ENCODE measurements at regions of chr1 and their contacts with region 1.

Region 1: DNA sequence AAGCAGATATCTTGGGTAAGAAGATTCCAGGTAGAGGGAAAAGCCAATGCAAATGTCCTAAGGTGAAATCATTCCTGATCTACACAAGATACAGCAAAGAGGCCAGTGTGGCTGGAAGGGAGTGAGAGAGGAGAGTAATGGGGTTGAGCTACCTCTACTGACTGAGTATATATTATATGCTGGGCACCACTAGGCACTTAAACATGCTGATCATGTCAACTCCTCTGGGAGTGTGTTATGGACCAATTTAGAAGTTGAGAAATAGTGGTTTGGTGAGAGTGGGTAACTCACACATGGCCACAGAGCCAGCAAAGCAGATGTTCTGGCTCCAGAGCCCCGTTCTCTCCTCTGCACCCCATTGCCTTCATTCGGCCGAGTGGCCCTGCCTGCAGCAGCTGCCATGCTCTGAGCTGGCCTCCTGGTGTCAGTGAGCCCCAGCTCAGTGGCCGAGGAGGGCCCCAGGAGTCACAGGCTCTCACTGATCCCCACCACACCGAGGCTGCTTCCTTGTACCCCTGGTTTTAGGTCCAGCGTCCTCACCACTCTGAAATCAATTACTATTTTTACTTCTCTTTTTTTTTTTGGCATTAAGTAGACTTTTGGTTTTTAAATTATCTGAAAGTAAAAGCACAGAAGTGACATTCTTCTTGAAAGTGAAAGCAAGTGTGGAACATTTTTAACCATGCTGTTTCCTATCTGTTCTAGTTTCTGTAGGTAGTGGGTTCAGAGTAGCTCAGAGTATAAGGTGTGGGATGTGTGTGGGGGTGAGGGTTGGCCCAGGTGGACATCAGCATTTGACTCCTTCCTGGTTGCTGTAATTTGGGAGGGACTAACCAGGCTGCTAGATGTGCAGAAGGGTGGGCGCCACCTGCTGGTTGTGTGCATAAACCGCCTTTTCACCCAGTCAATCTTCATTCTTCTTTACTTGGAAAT is 45.8 kb upstream of the CRNN start:
- DNase-seq: no peak
- H3K4me3 ChIP-seq: 0 out of 2 replicates have a peak overlapping the region, but pooled peaks have one; percentile 3
- CTCF ChIP-seq: peak; percentile 78

Region 2: GRCh38 chr1:152018537-152018936 is 441.3 kb before region 1 on chr1:
- CTCF ChIA-PET with region 1: no interaction called
- POLR2A ChIA-PET with region 1: no interaction called
- DNase-seq: no peak
- H3K4me3 ChIP-seq: no peak overlapping the region
- CTCF ChIP-seq: peak; percentile 22

Region 3: GRCh38 chr1:152141974-152142584 is 317.8 kb before region 1 on chr1:
- CTCF ChIA-PET with region 1: interaction called, 27 read pairs
- POLR2A ChIA-PET with region 1: no interaction called
- DNase-seq: peak; percentile 23
- H3K4me3 ChIP-seq: no peak overlapping the region
- CTCF ChIP-seq: peak; percentile 65

Region 4: DNA sequence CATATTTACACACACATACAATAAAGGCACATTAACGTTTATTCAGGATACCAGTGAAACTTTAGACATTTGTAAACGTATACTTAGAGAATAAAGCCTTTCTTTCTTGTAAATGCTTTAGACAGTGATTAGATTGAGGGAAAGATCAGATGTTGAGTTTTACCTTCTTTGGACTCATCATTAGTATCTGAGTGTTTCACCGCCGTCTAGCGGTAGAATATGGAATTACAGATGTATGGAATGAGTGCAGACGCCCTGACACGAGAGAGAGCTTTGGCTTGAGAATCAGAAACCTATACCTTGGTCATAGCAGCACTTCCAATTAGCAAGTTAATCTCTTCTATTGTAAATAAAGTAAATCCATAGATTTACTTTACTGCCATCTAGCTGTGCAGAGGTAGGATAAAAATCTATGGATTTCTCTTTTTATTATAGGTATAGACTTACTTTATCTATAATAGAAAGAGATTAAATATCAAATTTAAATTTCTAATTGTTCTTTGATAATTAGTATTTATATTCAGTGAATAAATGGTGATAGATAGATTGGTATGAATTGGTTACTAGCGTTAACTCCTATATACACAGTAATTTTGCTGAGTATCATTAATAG is 112.6 kb before region 1 on chr1:
- CTCF ChIA-PET with region 1: interaction called, 17 read pairs
- POLR2A ChIA-PET with region 1: no interaction called
- DNase-seq: no peak
- H3K4me3 ChIP-seq: no peak overlapping the region
- CTCF ChIP-seq: peak; percentile 66

Region 5: DNA sequence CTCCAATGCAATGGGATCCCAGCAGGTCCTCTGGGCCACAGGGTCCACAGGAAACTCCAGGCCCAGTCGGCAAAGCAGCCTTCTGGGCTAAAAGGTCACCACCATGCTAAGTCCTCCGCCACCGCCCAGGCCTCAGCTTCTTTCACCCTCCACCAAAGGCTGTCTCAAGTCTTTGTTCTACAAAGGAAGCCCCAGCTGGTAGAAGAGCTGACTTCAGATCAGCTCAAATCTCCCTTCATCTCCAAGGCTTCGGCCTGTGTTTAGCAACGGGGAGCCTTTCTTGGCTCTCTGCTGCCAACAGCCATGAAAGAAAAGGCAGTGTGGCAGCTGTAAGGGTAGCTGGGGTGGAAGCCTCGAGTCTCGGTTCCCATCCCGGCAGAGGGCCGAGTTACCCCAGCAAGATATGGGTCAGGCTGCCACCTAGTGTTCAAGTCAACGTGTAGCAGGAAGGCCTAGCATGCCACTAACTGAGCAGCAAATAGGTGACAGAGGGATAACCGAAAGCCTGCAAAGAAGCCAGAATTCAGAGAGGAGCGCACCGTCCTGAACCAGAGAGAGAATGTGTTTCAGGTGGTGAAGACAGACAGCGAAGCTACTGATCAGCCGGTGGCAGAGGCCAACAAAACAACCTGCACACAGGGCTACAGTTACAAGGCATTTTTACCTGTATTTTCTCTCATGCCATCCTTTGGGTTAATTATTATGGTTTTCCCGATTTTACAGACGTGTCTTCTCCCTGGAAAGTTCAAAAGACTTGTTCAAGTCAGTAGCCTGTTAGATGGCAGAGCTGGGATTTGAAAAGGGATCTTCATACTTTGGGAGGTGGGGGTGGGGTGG is 19.0 kb before region 1 on chr1:
- CTCF ChIA-PET with region 1: interaction called, 65 read pairs
- POLR2A ChIA-PET with region 1: no interaction called
- DNase-seq: no peak
- H3K4me3 ChIP-seq: no peak overlapping the region
- CTCF ChIP-seq: peak; percentile 82

Region 6: GRCh38 chr1:152479792-152480595 is 20.1 kb after region 1 on chr1:
- CTCF ChIA-PET with region 1: interaction called, 17 read pairs
- POLR2A ChIA-PET with region 1: no interaction called
- DNase-seq: no peak
- H3K4me3 ChIP-seq: no peak overlapping the region
- CTCF ChIP-seq: peak; percentile 30